ENCODE measurements at regions of chr11 and their contacts with region 1.

Region 1: GRCh38 chr11:32884770-32885384 is 7.7 kb upstream of the QSER1 start:
- H3K4me3 Mint-ChIP-seq: no peak overlapping the region
- H3K27ac Mint-ChIP-seq: no peak overlapping the region
- H3K4me1 Mint-ChIP-seq: no peaks in the 10 kb centered on the region
- H3K27me3 Mint-ChIP-seq: no peaks in the 10 kb centered on the region

Region 2: GRCh38 chr11:32602657-32603415 is 282.0 kb before region 1 on chr11:
- intact Hi-C with region 1: no loop called
- H3K4me3 Mint-ChIP-seq: no peak overlapping the region
- H3K27ac Mint-ChIP-seq: no peak overlapping the region
- H3K4me1 Mint-ChIP-seq: no peaks in the 10 kb centered on the region
- H3K27me3 Mint-ChIP-seq: no peaks in the 10 kb centered on the region

Region 3: GRCh38 chr11:32643526-32643925 is 241.4 kb before region 1 on chr11:
- intact Hi-C with region 1: loop called (anchors 5 kb)
- H3K4me3 Mint-ChIP-seq: no peak overlapping the region
- H3K27ac Mint-ChIP-seq: no peak overlapping the region
- H3K4me1 Mint-ChIP-seq: no peaks in the 10 kb centered on the region
- H3K27me3 Mint-ChIP-seq: no peaks in the 10 kb centered on the region